ENCODE measurements at regions of chr16 and their contacts with region 1.

Region 1: DNA sequence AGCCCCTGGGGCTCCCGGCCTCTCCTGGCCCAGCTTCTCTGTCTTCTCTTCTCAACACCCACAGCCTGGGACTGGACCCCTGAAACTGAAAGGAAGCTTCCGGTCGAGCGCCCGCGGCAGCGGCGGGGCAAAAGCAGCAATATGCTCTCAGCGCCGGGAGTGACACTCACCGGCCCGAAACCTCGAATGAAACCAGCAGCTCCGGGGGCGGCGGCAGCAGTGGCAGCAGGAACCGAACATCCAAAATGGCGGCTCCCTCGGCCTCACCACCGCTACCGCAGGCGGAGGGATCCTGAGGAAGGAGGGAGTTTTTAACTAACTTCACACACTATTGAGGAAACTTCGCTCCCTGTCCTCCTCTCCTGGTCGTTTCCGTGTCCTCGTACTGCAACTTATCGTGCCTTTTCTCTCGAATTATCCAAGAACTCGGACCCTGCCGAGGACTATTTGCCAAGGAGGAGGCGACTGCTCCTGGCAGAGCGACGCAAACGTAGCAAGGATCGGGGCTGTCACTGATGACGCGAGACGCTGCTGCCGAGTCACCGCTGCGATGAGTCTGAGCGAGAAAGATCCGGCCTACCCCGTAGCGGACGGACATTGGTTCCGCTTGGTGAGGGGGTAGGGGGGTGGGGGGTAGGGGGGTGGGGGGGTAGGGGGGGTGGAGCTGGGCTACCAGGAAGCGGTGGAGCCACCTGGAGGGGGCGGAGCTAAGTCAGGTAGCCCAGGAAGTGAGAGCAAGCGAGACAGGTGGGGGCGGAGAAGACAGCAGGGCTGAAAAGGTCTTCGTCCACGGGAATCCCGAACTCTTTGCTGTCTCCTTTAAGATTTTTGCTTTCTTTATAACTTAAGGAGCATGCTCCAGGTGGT is at the start of gene AP1G1:
- DNase-seq: peak; percentile 94
- H3K4me3 Mint-ChIP-seq: peak within 1 kb of the TSS; percentile 94
- H3K27ac Mint-ChIP-seq: peak within 1 kb of the TSS; percentile 93
- H3K4me1 Mint-ChIP-seq: peaks cover 30% of the 10 kb centered on the region
- H3K27me3 Mint-ChIP-seq: no peaks in the 10 kb centered on the region
- total RNA-seq, gene AP1G1: 78.7 to 82.6 TPM

Region 2: GRCh38 chr16:71412270-71413160 is 396.3 kb before region 1 on chr16:
- CTCF ChIA-PET with region 1: no interaction called
- POLR2A ChIA-PET with region 1: no interaction called
- DNase-seq: peak; percentile 61
- H3K4me3 Mint-ChIP-seq: no peak overlapping the region
- H3K27ac Mint-ChIP-seq: no peak overlapping the region
- H3K4me1 Mint-ChIP-seq: peaks cover 7% of the 10 kb centered on the region
- H3K27me3 Mint-ChIP-seq: peaks cover 33% of the 10 kb centered on the region

Region 3: GRCh38 chr16:71794943-71795342 is 13.9 kb before region 1 on chr16:
- CTCF ChIA-PET with region 1: interaction called, 3 read pairs
- POLR2A ChIA-PET with region 1: interaction called, 13 read pairs
- DNase-seq: no peak
- H3K4me3 Mint-ChIP-seq: no peak overlapping the region
- H3K27ac Mint-ChIP-seq: no peak overlapping the region
- H3K4me1 Mint-ChIP-seq: peaks cover 38% of the 10 kb centered on the region
- H3K27me3 Mint-ChIP-seq: no peaks in the 10 kb centered on the region

Region 4: DNA sequence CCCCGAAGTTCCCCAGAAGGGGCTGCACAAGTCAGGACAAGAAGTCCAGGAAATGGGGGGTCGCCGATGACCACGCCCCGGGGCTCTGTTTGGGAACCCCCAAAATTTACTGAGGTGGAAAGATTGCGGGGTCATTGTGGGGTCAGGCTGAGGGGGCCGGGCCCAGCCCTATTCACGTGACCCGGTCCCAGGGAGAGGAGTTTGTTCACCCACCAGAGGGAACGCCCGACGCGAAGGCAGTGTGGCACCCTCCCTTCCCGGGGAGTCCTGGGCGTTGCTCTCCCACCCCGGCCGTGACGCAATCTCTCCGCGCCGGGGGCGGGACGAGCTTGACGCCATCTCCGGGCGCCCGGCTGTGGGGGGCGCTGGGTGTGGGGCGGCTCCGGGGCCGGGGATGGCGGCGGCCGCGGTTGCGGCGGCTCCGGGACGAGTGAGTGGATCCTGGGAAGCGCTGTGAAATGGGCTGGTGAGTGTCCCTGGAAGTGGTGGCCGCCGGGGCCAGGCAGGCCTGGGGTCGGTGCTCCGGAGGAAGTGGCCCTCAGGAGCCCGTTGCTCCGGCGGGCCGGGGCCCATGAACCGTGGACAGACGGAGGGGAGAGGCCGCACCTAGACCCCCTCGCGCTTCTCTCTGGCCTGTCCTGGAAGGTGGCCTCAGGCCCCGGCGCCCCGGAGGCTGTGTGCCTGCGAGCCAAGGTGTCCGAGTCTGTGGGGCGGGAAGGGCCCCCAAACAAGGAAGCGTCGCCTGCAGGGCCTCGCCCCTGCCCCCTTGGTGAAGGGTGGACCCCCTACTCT is 37.0 kb after region 1 on chr16 and contains the start of gene ATXN1L:
- CTCF ChIA-PET with region 1: interaction called, 4 read pairs
- POLR2A ChIA-PET with region 1: interaction called, 39 read pairs
- DNase-seq: peak; percentile 94
- H3K4me3 Mint-ChIP-seq: peak within 1 kb of the TSS; percentile 91
- H3K27ac Mint-ChIP-seq: peak within 1 kb of the TSS; percentile 93
- H3K4me1 Mint-ChIP-seq: peaks cover 53% of the 10 kb centered on the region
- H3K27me3 Mint-ChIP-seq: no peaks in the 10 kb centered on the region
- total RNA-seq, gene ATXN1L: 23.6 to 24.8 TPM

Region 5: DNA sequence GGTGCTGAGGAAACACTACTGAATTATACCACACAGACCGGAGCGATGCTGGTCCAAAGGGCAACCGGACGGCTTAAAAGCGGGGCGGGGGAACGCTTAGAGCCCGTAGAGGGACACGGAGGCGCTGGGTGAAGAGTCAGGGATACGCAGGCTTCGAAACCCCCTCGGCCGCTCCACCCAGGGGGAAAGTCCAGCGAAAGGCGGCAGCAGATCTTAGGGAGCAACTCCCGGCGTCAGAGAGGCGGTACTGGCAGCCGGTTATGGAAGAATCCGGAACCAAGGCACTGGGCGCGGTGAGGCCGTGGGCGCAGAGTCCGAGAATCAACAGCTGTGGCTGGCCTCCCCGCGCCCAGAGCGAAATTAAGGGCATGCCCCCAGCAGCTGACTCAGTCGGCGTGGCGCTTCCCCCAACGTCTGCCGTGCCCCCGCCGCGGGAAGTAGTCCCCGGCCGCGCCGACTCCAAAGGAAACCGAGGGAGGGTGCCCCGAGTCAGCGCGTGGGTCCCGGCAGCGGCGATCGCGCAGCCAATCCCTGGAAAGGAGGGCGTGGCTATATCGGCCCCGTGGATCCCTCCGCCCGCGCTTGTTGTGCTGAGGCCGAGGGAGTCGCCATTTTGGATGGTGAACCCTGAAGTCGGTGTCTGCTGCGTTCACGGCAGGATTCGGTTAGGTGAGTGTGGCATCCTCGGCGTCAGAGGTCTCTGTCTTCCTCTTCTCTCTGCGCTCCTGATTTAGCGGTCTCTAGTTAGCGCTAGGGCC is 86.3 kb after region 1 on chr16 and contains the start of gene IST1:
- CTCF ChIA-PET with region 1: interaction called, 5 read pairs
- POLR2A ChIA-PET with region 1: interaction called, 53 read pairs
- DNase-seq: peak; percentile 98
- H3K4me3 Mint-ChIP-seq: peak within 1 kb of the TSS; percentile 99
- H3K27ac Mint-ChIP-seq: peak within 1 kb of the TSS; percentile 97
- H3K4me1 Mint-ChIP-seq: peaks cover 29% of the 10 kb centered on the region
- H3K27me3 Mint-ChIP-seq: no peaks in the 10 kb centered on the region
- total RNA-seq, gene IST1: 227 to 229 TPM